Ovary (tissue), 10 donors: ENCODE measurements at regions of chr20 and their contacts with region 1.

Region 1: DNA sequence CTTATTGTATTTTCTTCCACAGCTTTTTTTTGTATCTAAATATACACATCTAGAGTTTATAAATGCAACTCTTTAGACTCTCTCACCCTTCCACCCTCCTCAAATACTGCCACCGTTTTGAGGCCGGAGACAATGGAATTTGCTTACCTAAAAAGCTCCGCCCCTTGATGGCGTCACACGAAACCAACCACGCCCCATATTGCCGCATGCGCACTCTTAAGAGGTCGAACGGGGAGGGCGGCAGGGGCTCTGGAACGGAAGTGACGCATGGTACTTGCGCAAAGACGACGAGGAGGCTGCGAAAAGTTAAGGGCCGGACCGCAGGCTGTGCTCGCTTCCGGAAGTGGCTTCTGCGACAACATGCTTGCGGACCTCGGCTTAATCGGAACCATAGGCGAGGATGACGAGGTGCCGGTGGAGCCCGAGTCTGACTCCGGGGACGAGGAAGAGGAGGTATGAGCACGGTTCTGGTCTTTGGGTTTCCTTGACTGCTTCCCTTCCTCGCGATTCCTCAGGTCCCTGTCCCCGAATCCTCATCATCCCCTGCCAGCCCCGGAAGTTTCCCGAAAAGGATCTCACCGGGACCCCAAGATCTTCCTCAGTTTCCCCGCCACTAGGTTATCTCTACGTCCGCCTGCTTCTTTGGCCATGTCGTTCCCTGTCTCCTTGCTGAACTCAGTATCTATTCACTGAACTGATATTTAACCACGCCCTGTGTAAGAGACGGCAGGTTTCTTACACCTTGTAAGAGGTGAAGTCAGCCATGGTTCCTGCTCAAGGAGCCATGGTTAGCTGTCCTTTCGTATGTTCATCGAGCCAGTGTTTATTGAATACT is at the start of gene DDX27:
- DNase-seq: peak; percentile 95 to 99 (median 98)
- H3K4me3 ChIP-seq: peak within 1 kb of the TSS; percentile 84
- H3K27ac ChIP-seq: peak within 1 kb of the TSS; percentile 5 to 68
- H3K4me1 ChIP-seq: peaks cover 4% of the 10 kb centered on the region
- H3K27me3 ChIP-seq: no peaks in the 10 kb centered on the region
- CTCF ChIP-seq: no peak
- EP300 ChIP-seq: peak; percentile 89
- POLR2A ChIP-seq: peak; percentile 93
- total RNA-seq, gene DDX27: 30.4 to 44.9 (median 36.8) TPM

Region 2: DNA sequence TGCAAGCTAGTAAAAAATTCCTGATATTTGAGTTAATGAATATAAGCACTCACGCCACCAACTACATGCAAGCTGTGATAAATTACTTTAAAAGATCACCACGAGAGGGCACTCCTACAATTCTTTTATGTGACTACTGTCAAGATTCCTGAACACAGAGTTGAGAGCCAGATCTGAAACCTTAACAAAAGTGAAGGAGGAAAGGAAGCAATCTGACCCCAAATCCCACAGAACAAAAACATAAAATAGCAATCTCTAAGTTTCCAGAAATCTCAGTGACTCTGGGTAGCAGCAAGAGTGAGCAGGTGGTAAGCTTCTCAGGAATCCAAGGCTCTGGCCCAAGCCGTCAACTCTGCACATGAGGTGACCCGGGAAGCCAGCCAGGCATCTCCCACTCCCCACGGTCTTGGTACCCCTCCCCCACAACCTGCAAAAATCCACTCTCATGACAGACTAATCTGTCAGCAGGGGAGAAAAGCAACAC is 86.3 kb before region 1 on chr20:
- intact Hi-C with region 1: loop called (anchors 1 to 5 kb)
- DNase-seq: peak in 3 of 5 donors; percentile 37 to 46 (median 43)
- H3K4me3 ChIP-seq: no peak overlapping the region
- H3K27ac ChIP-seq: no peak overlapping the region
- H3K4me1 ChIP-seq: no peaks in the 10 kb centered on the region
- H3K27me3 ChIP-seq: no peaks in the 10 kb centered on the region
- CTCF ChIP-seq: peak; percentile 38 to 70 (median 68)
- EP300 ChIP-seq: no peak
- POLR2A ChIP-seq: no peak

Region 3: DNA sequence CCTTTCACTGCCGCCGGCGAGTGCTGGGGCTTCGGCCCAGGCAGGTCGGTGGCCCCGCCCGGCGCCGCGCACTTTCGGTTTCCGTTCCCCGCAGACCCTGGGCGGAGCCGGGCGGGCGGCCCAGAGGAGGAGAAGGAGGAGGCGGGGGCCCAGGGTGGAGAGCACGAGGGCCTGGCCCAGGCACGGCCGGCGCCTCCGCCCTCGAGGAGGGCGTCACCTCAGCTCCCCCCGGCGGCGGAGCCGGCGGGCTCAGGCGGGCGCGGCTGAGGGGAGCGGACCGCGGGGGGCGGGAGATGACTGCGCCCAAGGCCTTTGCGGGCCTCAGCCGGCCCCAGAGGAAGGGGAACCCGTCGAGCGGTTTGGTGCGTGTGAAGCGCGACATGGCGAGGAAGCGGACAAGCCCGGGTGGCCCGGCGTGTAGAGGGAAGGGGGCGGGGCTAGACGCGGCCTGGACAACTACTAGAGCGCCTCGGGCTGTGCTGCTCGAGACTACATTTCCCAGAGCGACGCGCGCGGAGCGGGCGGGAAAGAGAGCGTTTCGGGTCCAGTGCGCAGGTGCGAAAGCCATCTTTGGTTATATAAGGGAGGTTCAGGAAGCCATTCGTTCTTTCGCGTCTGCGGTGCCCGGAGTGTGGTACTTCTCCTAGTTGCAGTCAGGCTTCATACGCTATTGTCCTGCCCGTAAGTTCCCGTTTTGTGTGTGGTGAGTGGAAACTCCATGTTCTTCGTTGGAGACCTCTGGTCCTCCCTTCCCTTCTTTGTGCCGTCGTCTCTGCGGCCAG is 58.9 kb after region 1 on chr20 and contains the start of gene ZNFX1:
- intact Hi-C with region 1: loop called in 1 of 4 experiments (anchors 10 kb)
- DNase-seq: peak; percentile 98 to 99 (median 99)
- H3K4me3 ChIP-seq: peak within 1 kb of the TSS; percentile 58
- H3K27ac ChIP-seq: peak within 1 kb of the TSS; percentile 98 to 99
- H3K4me1 ChIP-seq: peaks cover 15% of the 10 kb centered on the region
- H3K27me3 ChIP-seq: no peaks in the 10 kb centered on the region
- CTCF ChIP-seq: peak in 1 of 3 donors; percentile 18
- EP300 ChIP-seq: peak; percentile 15
- POLR2A ChIP-seq: peak; percentile 98
- total RNA-seq, gene ZNFX1: 17.6 to 29.7 (median 23.5) TPM